A549 (cell line): ENCODE measurements at regions of chr15 and their contacts with region 1.

Region 1: DNA sequence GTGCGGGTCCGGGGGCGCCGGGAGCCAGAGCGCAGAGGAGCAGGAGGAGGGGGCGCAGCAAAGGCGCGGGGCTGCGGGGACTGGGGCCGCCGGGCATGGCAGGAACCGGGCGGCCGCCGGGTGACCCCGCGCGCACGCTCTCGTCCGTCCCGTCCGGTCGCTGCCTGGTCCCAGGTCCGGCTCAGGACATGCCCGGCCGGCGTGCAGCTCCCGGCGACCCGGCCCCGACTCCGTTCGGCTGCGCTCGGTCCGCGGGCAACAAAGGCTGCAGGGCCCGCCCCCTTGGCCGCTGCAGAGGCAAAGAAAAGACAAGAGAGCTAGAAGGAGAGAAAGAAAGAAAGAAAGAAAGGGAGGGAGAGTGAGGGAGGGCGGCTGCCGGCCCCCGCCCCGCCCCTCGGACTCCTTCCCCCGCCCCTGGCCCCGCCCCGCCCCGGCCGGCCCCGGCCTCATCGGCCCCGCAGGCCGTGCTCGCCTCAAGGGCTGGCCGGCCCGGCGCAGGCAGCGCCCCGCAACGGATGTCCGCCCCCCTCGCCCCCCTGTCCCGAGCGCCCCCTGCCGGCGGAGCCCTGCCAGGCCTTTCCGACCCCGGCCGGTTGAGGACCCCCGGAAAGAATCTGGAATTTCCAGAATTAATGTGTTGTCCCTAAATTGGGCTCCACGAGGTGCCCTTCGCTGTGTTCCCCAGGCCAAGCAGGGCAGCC is at the start of gene ADAMTS7:
- DNase-seq: peak; percentile 78 to 96
- ATAC-seq: peak; percentile 86 to 92
- H3K4me3 ChIP-seq: peak within 1 kb of the TSS; percentile 74
- H3K27ac ChIP-seq: peak within 1 kb of the TSS; percentile 69 to 84
- H3K4me1 ChIP-seq: peaks cover 4% of the 10 kb centered on the region; the same call in 2 of the 3 replicates
- CTCF ChIP-seq: peak; percentile 86
- EP300 ChIP-seq: no peak; a peak in 1 of 5 replicates
- POLR2A ChIP-seq: peak; percentile 4; the same call in 1 of the 2 replicates
- RAD21 ChIP-seq: peak in 1 of 2 experiments; percentile 50; a peak in 3 of 5 replicates
- polyA plus RNA-seq, gene ADAMTS7: 1.5 and 2.0 TPM in 2 replicates

Region 2: DNA sequence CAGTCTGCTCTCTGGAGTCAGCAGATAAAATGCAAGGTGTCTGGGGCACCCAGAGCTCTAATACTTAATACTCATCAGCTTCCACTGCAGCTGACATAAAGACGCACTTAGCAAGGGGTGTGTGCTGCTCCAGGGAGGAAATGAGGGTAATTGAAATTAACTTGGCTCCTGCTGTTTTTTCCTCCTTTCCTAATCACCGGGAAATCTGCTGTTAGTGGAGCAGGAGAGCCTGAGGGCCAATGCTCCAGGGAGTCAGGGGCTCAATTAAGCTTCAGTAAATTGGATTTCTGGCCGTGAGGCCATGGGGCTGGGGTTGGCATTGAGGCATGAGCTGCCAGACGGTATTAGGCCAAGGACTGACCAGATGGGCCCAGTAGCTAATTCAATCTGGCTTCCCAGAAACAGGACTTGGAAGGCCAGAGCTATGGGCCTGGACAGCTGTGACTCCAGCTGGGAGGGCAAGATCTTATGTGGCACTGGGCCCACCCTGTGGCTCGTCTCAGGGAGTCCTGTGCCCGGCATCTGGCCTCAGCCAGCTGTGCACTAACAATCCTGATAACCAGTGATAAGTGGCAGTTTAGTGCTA is 139.6 kb before region 1 on chr15:
- CTCF ChIA-PET with region 1: no interaction called
- POLR2A ChIA-PET with region 1: no interaction called
- DNase-seq: no peak
- ATAC-seq: no peak
- H3K4me3 ChIP-seq: no peak overlapping the region
- H3K27ac ChIP-seq: peak overlapping the region in 1 of 2 experiments; percentile 61; a peak in 3 of 6 replicates
- H3K4me1 ChIP-seq: peaks cover 6% of the 10 kb centered on the region; the same call in 1 of the 3 replicates
- CTCF ChIP-seq: no peak
- EP300 ChIP-seq: no peak
- POLR2A ChIP-seq: no peak
- RAD21 ChIP-seq: no peak

Region 3: DNA sequence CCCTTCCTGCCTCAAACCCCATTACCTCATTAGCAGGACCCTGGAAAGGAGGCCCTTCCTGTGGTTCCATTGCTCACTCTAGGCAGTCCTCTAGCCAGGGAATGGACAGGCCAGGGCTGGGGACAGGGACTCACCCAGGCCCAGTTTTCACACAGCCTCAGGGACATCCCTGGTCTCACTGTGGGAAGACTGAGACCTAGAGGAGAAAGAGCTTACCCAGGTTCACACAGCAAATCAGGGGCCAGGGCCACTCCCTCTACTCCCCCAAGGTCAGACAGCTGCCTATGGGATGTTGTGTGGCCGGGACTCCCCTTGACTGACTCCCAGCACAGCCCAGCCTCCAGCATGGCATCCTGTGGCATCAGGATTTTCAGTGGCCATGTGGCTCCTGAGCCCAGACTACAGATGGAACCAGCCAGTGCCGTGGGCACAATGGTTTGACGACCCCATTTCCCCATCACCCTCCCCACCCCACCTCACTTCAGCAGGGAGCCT is 49.3 kb before region 1 on chr15:
- CTCF ChIA-PET with region 1: interaction called, 15 read pairs
- POLR2A ChIA-PET with region 1: no interaction called
- DNase-seq: no peak
- ATAC-seq: no peak
- H3K4me3 ChIP-seq: no peak overlapping the region
- H3K27ac ChIP-seq: no peak overlapping the region
- H3K4me1 ChIP-seq: peaks cover 1% of the 10 kb centered on the region; the same call in 2 of the 3 replicates
- CTCF ChIP-seq: no peak
- EP300 ChIP-seq: no peak
- POLR2A ChIP-seq: no peak
- RAD21 ChIP-seq: no peak

Region 4: GRCh38 chr15:78795670-78796069 is 15.6 kb before region 1 on chr15:
- CTCF ChIA-PET with region 1: interaction called, 85 read pairs
- POLR2A ChIA-PET with region 1: interaction called, 7 read pairs
- DNase-seq: no peak
- ATAC-seq: 0 out of 6 replicates have a peak, but pooled peaks of 1 of the 2 experiments have one; percentile 16
- H3K4me3 ChIP-seq: no peak overlapping the region
- H3K27ac ChIP-seq: no peak overlapping the region; a peak in 1 of 6 replicates
- H3K4me1 ChIP-seq: peaks cover 17% of the 10 kb centered on the region
- CTCF ChIP-seq: no peak
- EP300 ChIP-seq: no peak
- POLR2A ChIP-seq: no peak
- RAD21 ChIP-seq: no peak

Region 5: GRCh38 chr15:78840661-78841375 is 29.5 kb after region 1 on chr15:
- CTCF ChIA-PET with region 1: interaction called, 13 read pairs
- POLR2A ChIA-PET with region 1: no interaction called
- DNase-seq: no peak
- ATAC-seq: peak; percentile 22 to 35; a peak in 4 of 6 replicates
- H3K4me3 ChIP-seq: no peak overlapping the region
- H3K27ac ChIP-seq: no peak overlapping the region
- H3K4me1 ChIP-seq: no peaks in the 10 kb centered on the region
- CTCF ChIP-seq: no peak
- EP300 ChIP-seq: no peak
- POLR2A ChIP-seq: no peak
- RAD21 ChIP-seq: no peak

Region 6: GRCh38 chr15:78872972-78873792 is 61.9 kb after region 1 on chr15:
- CTCF ChIA-PET with region 1: interaction called, 3 read pairs
- POLR2A ChIA-PET with region 1: interaction called, 10 read pairs
- DNase-seq: peak; percentile 85 to 97
- ATAC-seq: peak; percentile 89 to 92
- H3K4me3 ChIP-seq: peak overlapping the region; percentile 99
- H3K27ac ChIP-seq: peak overlapping the region; percentile 94 to 100
- H3K4me1 ChIP-seq: peaks cover 38% of the 10 kb centered on the region
- CTCF ChIP-seq: peak; percentile 68
- EP300 ChIP-seq: no peak
- POLR2A ChIP-seq: peak; percentile 17
- RAD21 ChIP-seq: peak in 1 of 2 experiments; percentile 15; a peak in 2 of 5 replicates